Right ventricle myocardium superior (tissue), 1 donor: ENCODE measurements at regions of chrX and their contacts with region 1.

Region 1: GRCh38 chrX:14029425-14030173 is at the start of gene GEMIN8:
- DNase-seq: peak; percentile 90
- ATAC-seq: peak; percentile 99
- total RNA-seq, gene GEMIN8: 7.6 TPM

Region 2: GRCh38 chrX:13506574-13506973 is 523.0 kb before region 1 on chrX:
- intact Hi-C with region 1: loop called (anchors 5 kb)
- DNase-seq: peak; percentile 48
- ATAC-seq: no peak

Region 3: DNA sequence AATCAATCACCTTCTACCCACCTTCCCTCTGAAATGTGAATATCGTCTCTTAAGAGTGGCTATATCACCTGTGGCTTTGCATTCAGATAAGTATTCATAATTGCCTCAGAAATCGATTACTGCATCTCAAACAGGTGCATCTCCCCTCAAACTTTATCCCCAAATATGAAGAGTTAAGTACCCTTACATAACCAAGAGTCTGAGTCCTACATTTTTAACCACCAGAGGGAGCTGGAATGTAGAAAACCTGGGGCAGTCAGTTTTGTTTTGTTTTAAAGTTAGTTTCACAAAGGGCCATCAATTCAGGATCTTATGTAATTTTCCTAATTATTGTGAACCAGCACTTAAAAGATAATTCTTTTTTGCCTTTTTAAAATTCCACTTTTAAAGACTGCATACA is 371.0 kb before region 1 on chrX:
- intact Hi-C with region 1: loop called (anchors 5 kb)
- DNase-seq: no peak
- ATAC-seq: peak; percentile 75

Region 4: DNA sequence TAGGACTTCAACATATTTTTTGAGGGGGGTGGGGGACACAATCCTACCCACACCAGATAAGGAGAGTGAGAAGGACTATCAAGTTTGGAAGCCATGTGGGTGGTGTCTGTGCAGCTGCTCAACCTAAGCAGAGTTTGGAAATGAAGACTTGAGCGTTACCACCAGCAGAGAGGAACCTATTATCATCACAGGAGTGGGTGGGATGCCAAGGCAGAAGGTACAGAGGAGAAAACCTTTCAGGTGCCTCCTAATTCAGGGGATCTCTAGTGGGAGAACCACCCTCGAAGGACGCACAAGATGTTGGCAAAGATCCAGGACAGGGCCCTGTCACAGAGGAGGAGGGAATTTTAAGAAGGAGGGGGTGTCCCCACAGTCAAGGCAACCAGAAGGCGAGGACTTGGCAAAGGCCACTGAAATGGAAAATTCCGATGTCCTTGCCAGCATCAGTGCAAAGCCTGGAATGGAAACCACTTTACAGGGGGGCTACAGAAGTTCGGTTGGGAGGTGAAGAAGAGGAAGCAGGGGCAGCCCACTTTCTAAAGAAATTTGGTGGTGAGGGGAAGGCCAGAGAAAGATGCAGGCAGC is 204.3 kb before region 1 on chrX:
- intact Hi-C with region 1: no loop called
- DNase-seq: no peak
- ATAC-seq: no peak

Region 5: GRCh38 chrX:14064626-14065432 is 35.2 kb after region 1 on chrX:
- intact Hi-C with region 1: no loop called
- DNase-seq: no peak
- ATAC-seq: no peak

Region 6: GRCh38 chrX:15143050-15143824 is 1113.6 kb after region 1 on chrX:
- intact Hi-C with region 1: loop called (anchors 10 kb)
- DNase-seq: peak; percentile 43
- ATAC-seq: no peak